ENCODE measurements at regions of chr5 and their contacts with region 1.

Region 1: GRCh38 chr5:149656576-149657182 is 73.4 kb upstream of the PPARGC1B start:
- DNase-seq: peak; percentile 63
- ATAC-seq: no peak
- H3K4me3 Mint-ChIP-seq: no peak overlapping the region
- H3K27ac Mint-ChIP-seq: no peak overlapping the region
- H3K4me1 Mint-ChIP-seq: no peaks in the 10 kb centered on the region
- H3K27me3 Mint-ChIP-seq: peaks cover 2% of the 10 kb centered on the region
- CTCF ChIP-seq: peak; percentile 87

Region 2: GRCh38 chr5:149828161-149828884 is 171.6 kb after region 1 on chr5:
- CTCF ChIA-PET with region 1: interaction called, 13 read pairs
- POLR2A ChIA-PET with region 1: no interaction called
- intact Hi-C with region 1: no loop called
- DNase-seq: peak; percentile 93
- ATAC-seq: peak; percentile 65
- H3K4me3 Mint-ChIP-seq: no peak overlapping the region
- H3K27ac Mint-ChIP-seq: peak overlapping the region; percentile 52
- H3K4me1 Mint-ChIP-seq: peaks cover 11% of the 10 kb centered on the region
- H3K27me3 Mint-ChIP-seq: no peaks in the 10 kb centered on the region
- CTCF ChIP-seq: peak; percentile 88

Measured in activated CD8-positive, alpha-beta T cell treated with anti-CD3 and anti-CD28 coated beads for 36 hours (primary cell).